ENCODE measurements at regions of chr10 and their contacts with region 1.

Region 1: GRCh38 chr10:87531908-87532622 is 27.4 kb downstream of the MINPP1 start:
- DNase-seq: peak; percentile 75
- H3K4me3 ChIP-seq: no peak overlapping the region
- H3K27ac ChIP-seq: peak overlapping the region in 3 of 4 donors; percentile 35 to 71 (median 54)
- H3K4me1 ChIP-seq: no peaks in the 10 kb centered on the region
- H3K27me3 ChIP-seq: no peaks in the 10 kb centered on the region
- CTCF ChIP-seq: no peak
- EP300 ChIP-seq: no peak
- POLR2A ChIP-seq: no peak

Region 2: DNA sequence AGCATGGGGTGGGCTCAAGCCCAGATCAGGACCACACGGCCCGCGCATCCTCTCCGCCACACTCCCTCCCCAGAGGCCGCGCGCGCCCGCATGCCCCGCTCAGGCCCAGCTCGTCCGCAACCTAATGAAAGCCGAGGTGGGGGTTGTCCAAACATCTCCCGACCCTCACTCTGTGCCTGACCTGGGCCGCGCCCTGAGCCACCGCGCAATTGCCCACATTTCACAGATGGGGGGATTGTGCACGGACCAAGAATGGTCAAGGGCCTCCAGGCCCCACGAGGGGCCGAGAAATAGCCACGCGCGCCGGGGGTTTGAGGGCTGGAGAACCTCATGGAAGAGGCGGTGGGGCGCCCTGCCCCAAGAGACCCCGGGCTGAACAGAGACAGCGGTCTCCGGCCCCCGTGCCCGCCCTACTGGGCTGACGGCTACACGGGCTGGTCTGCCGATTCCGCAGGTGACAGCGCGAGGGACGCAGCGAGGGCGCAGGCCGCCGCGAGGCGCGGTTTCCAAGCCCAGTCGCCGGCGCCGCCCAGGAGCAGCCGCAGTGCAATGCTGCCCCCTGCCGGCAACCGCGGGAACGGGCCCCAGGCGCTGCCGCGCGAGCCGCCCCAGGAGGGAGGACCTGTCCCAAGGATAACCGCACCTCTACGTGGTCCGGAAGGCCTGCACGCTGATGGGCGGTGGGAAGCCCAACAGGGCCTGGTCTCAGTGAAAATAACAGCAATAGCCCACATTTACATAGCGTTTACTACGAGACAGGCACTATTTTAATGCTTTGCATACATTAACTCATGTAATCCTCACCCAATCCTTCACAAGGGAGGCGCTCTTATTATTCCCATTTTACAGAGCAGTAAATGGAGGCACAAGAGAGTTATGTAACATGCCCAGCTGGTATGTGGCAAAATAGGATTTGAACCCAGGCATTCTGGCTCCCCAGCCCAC is 1154.9 kb before region 1 on chr10:
- intact Hi-C with region 1: no loop called
- DNase-seq: peak; percentile 82
- H3K4me3 ChIP-seq: peak overlapping the region in 3 of 4 donors; percentile 12 to 35 (median 34)
- H3K27ac ChIP-seq: no peak overlapping the region
- H3K4me1 ChIP-seq: peaks cover 0 to 8% (median 7%) of the 10 kb centered on the region in 4 donors
- H3K27me3 ChIP-seq: peaks cover 4 to 63% (median 35%) of the 10 kb centered on the region in 3 donors
- CTCF ChIP-seq: peak; percentile 66 to 99 (median 86)
- EP300 ChIP-seq: no peak
- POLR2A ChIP-seq: no peak

Region 3: DNA sequence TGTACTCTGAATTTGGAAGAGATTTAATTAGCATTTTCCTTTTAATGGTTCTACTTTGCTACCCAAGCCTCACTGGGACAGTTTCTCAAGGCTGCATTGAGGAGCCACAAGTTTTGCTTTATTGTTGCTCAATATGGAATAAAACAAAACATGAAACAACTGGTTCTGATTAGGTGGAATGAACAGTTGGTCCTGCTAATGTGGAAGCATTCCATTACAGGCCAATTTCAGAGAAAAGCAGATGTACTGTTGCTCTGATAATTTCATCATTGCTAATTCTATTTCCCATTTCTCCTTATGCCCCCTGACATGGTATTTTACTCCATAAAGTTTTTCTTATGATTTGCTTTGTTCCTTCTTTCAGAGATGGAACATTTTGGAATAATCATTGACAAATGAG is 61.6 kb after region 1 on chr10:
- intact Hi-C with region 1: no loop called
- DNase-seq: no peak
- H3K4me3 ChIP-seq: no peak overlapping the region
- H3K27ac ChIP-seq: peak overlapping the region in 2 of 4 donors; percentile 8 to 32
- H3K4me1 ChIP-seq: no peaks in the 10 kb centered on the region
- H3K27me3 ChIP-seq: no peaks in the 10 kb centered on the region
- CTCF ChIP-seq: no peak
- EP300 ChIP-seq: no peak
- POLR2A ChIP-seq: no peak

Region 4: DNA sequence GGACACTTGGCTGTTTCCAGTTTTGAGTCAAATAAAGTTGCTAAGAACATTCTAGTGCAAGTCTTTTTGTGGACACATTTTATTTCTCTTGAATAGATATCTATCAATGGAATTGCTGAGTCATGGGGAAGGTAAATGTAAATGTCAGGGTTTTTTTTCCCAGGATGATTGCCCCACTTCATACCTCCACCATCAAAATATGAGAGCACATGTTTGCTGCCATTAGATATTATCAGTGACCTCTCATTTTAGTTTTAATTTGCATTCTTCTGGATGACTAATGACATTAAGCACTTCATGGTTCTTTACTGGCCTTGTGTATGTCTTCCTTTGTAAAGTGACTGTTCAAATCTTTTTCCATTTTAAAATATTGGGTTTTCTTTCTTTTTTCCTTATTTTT is 173.3 kb after region 1 on chr10:
- intact Hi-C with region 1: no loop called
- DNase-seq: no peak
- H3K4me3 ChIP-seq: no peak overlapping the region
- H3K27ac ChIP-seq: no peak overlapping the region
- H3K4me1 ChIP-seq: no peaks in the 10 kb centered on the region
- H3K27me3 ChIP-seq: no peaks in the 10 kb centered on the region
- CTCF ChIP-seq: no peak
- EP300 ChIP-seq: no peak
- POLR2A ChIP-seq: no peak

Region 5: GRCh38 chr10:87734987-87735827 is 203.1 kb after region 1 on chr10:
- intact Hi-C with region 1: loop called (anchors 10 kb)
- DNase-seq: no peak
- H3K4me3 ChIP-seq: no peak overlapping the region
- H3K27ac ChIP-seq: no peak overlapping the region
- H3K4me1 ChIP-seq: peaks cover 0 to 7% (median 6%) of the 10 kb centered on the region in 4 donors
- H3K27me3 ChIP-seq: no peaks in the 10 kb centered on the region
- CTCF ChIP-seq: peak; percentile 21 to 64 (median 58)
- EP300 ChIP-seq: no peak
- POLR2A ChIP-seq: no peak

Region 6: GRCh38 chr10:88064608-88065382 is 532.7 kb after region 1 on chr10:
- intact Hi-C with region 1: no loop called
- DNase-seq: peak; percentile 89
- H3K4me3 ChIP-seq: no peak overlapping the region
- H3K27ac ChIP-seq: peak overlapping the region in 2 of 4 donors; percentile 39 to 42
- H3K4me1 ChIP-seq: peaks cover 0 to 32% (median 26%) of the 10 kb centered on the region in 4 donors
- H3K27me3 ChIP-seq: no peaks in the 10 kb centered on the region
- CTCF ChIP-seq: no peak
- EP300 ChIP-seq: peak in 1 of 4 donors; percentile 41
- POLR2A ChIP-seq: no peak